BJ (cell line): ENCODE measurements at regions of chr11 and their contacts with region 1.

Region 1: DNA sequence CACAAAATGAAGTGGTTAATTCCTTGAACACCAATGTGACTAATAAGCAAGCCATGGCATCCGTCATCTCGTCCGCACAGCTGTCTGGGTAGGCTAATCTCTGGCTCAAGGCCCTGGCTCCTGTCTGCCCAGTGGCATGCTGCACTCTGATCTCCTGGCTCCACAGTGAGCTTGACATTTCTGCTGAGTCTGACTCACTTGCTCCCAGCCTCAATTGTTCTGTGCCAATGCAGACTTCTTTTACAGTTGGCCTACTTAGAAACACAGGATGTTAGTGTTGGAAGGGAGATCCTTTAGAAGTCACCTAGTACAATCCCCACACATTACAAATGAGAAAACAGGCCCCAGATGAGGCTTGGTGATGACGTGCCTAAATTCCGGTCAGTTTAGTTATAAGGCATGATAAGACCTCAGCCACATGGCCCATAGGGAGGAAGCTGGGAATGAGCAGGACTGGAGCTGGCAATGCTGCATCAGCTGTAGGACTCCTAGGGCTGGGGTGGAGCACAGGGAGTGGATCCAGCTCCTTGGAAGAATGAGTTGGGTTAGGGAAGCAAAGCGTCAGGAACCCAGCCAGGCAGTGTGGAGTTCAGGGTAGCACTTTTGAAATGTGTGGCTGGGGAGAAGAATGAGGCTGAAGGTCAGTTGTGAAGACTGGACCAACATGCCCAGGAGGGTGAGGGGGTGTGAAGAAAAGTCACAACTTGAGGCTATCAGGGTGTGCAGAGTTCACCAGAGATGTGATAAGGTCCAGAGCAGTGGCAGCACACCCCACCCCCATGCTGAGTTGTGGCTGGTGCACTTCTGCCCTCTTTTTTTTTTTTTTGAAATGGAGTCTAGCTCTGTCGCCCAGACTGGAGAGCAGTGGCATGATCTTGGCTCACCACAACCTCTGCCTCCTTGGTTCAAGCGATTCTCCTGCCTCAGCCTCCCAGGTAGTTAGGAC is 70.2 kb upstream of the EED start:
- DNase-seq: peak; percentile 94
- H3K4me3 ChIP-seq: no peak overlapping the region
- H3K27me3 ChIP-seq: no peaks in the 10 kb centered on the region
- CTCF ChIP-seq: no peak

Region 2: DNA sequence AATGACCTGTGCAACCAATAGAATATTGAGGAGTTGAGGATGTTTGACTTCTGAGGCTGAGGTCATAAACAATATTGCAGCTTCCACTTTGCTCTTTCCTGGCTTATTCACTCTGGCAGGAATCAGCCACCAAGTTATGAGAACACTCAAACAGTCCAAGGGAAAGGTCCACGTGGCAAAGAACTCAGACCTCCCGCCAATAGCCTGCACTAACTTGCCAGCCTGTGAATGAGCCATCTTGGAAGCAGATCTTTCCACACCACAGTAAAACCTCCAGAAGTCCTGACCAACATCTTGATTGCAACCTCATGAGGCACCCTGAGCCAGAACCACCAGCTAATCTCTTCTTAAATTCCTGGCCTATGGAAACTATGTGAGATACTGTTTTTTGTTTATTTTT is 82.8 kb before region 1 on chr11:
- CTCF ChIA-PET with region 1: no interaction called
- POLR2A ChIA-PET with region 1: interaction called, 14 read pairs
- DNase-seq: no peak
- H3K4me3 ChIP-seq: no peak overlapping the region
- H3K27me3 ChIP-seq: no peaks in the 10 kb centered on the region
- CTCF ChIP-seq: no peak